ENCODE measurements at regions of chr4 and their contacts with region 1.

Region 1: GRCh38 chr4:99047715-99048114 is 40.9 kb downstream of the ADH5 start:
- DNase-seq: no peak
- H3K4me3 ChIP-seq: no peak overlapping the region
- H3K27ac ChIP-seq: no peak overlapping the region
- H3K4me1 ChIP-seq: no peaks in the 10 kb centered on the region
- H3K27me3 ChIP-seq: no peaks in the 10 kb centered on the region
- CTCF ChIP-seq: no peak

Region 2: GRCh38 chr4:98822144-98822543 is 225.6 kb before region 1 on chr4:
- CTCF ChIA-PET with region 1: no interaction called
- dilution Hi-C with region 1: no loop called
- in situ Hi-C with region 1: no loop called
- intact Hi-C with region 1: no loop called
- DNase-seq: no peak
- H3K4me3 ChIP-seq: no peak overlapping the region
- H3K27ac ChIP-seq: no peak overlapping the region
- H3K4me1 ChIP-seq: no peaks in the 10 kb centered on the region
- H3K27me3 ChIP-seq: no peaks in the 10 kb centered on the region
- CTCF ChIP-seq: no peak

Region 3: DNA sequence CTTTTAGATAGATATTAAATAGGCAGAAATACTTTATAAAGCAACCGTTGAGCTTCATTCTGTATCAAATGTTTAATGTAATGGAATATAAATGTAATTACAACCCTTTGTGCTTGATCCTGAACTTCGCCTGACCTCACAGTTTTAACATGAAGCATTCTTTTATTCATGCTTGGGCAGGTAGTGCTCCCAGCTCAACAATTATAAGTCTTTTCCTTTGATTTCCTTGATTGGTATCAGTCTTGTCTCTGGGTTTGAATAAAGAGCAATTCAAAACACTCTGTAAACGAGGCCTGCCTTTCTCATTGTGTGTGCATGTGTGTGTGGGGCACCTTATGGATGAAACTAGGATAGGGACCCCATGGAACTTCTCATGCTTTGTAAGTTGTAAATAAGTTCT is 45.4 kb before region 1 on chr4:
- CTCF ChIA-PET with region 1: interaction called, 3 read pairs
- dilution Hi-C with region 1: no loop called
- in situ Hi-C with region 1: loop called in 1 of 2 experiments (anchors 5 kb)
- intact Hi-C with region 1: no loop called
- DNase-seq: peak; percentile 54
- H3K4me3 ChIP-seq: peak overlapping the region; percentile 12 to 39 (median 34)
- H3K27ac ChIP-seq: peak overlapping the region; percentile 83
- H3K4me1 ChIP-seq: peaks cover 47% of the 10 kb centered on the region
- H3K27me3 ChIP-seq: no peaks in the 10 kb centered on the region
- CTCF ChIP-seq: no peak